IMR-90 (cell line): ENCODE measurements at regions of chr1 and their contacts with region 1.

Region 1: GRCh38 chr1:16078925-16079656 is 5.6 kb upstream of the FAM131C start:
- DNase-seq: peak; percentile 60
- ATAC-seq: peak; percentile 80
- H3K4me3 ChIP-seq: no peak overlapping the region
- H3K27ac ChIP-seq: no peak overlapping the region
- H3K4me1 ChIP-seq: peaks cover 15% of the 10 kb centered on the region
- H3K27me3 ChIP-seq: no peaks in the 10 kb centered on the region
- CTCF ChIP-seq: peak; percentile 89
- POLR2A ChIP-seq: peak; percentile 50; the same call in 1 of the 2 replicates
- RAD21 ChIP-seq: peak; percentile 96

Region 2: DNA sequence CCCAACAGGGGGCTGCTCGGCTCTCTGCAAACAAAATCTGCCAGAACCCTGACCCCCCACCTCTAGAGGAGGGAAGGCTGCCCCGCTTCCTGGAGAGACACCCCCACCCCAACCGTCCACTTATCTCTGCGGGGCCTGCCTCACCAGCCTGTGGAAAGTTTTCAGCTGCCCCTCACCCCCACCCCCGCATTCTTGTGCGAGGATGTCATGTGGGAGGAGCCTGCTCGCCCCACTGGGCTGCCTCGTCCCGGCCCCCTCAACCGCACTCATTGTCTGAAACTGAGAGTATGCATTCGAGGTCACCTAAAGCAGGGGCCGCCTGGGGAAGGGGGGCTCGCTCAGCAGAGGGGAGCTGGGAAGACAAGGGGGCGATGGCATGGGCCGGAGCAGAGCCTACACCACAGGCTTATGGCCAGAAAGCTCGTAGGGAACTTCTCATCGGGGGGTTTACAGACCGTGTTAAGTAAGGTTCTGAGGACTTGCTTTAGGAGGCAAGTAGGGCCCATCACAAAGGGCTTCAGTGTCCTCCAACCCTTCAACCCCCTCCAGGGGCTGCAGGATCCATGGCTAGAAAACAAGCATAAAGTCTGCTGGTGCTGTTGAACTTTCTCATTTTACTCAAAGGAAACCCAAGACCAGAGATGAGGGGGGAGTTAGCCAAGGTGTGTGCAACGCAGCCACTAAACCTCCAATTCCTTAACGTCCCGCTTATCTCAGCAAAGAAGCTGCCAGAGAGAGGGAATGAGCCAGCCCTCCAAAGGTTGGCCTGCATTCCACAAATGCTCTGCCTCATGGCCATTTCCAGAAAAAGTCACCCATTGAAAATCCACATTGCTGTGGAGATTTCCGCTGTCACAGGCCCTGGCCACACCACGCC is 67.4 kb after region 1 on chr1:
- CTCF ChIA-PET with region 1: interaction called, 5 read pairs
- POLR2A ChIA-PET with region 1: no interaction called
- dilution Hi-C with region 1: no loop called
- in situ Hi-C with region 1: no loop called
- intact Hi-C with region 1: loop called (anchors 2 kb)
- DNase-seq: peak; percentile 92
- ATAC-seq: peak; percentile 67
- H3K4me3 ChIP-seq: peak overlapping the region; percentile 13; the same call in 1 of the 2 replicates
- H3K27ac ChIP-seq: peak overlapping the region; percentile 99
- H3K4me1 ChIP-seq: peaks cover 51% of the 10 kb centered on the region
- H3K27me3 ChIP-seq: no peaks in the 10 kb centered on the region
- CTCF ChIP-seq: no peak
- POLR2A ChIP-seq: no peak; the same call in 1 of the 2 replicates
- RAD21 ChIP-seq: no peak

Region 3: DNA sequence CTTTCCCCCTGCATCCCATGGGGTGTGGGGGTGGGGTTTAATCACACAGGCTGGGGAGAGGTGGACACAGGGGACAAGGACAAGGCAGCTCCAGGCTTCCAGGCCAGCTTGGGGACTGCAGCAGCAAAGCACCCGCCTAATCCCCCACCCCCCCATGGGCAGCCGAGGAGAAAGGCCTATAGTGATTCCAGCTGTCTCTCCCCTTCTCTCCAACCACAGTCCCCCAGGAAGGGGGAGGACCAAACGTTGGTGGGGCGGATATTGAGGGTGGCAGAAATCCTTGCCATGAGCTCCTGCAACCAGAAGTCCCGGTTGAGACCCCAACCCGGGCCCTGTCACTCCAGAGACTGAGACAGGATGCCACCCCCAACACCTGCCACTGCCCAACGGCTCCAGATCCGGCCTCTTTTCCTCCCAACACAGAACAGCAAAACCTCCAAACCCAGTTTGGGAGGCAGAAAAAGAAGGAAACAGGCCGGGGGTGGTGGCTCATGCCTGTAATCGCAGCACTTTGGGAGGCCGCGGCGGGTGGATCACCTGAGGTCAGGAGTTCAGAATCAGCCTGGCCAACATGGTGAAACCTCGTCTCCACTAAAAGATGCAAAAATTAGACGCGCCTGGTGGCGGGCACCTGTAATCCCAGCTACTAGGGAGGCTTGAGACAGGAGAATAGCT is 75.0 kb after region 1 on chr1:
- CTCF ChIA-PET with region 1: interaction called, 8 read pairs
- POLR2A ChIA-PET with region 1: interaction called, 3 read pairs
- dilution Hi-C with region 1: no loop called
- in situ Hi-C with region 1: no loop called
- intact Hi-C with region 1: loop called (anchors 1 kb)
- DNase-seq: no peak
- ATAC-seq: no peak
- H3K4me3 ChIP-seq: peak overlapping the region; percentile 83
- H3K27ac ChIP-seq: peak overlapping the region; percentile 96
- H3K4me1 ChIP-seq: peaks cover 40% of the 10 kb centered on the region
- H3K27me3 ChIP-seq: no peaks in the 10 kb centered on the region
- CTCF ChIP-seq: no peak
- POLR2A ChIP-seq: no peak
- RAD21 ChIP-seq: no peak

Region 4: DNA sequence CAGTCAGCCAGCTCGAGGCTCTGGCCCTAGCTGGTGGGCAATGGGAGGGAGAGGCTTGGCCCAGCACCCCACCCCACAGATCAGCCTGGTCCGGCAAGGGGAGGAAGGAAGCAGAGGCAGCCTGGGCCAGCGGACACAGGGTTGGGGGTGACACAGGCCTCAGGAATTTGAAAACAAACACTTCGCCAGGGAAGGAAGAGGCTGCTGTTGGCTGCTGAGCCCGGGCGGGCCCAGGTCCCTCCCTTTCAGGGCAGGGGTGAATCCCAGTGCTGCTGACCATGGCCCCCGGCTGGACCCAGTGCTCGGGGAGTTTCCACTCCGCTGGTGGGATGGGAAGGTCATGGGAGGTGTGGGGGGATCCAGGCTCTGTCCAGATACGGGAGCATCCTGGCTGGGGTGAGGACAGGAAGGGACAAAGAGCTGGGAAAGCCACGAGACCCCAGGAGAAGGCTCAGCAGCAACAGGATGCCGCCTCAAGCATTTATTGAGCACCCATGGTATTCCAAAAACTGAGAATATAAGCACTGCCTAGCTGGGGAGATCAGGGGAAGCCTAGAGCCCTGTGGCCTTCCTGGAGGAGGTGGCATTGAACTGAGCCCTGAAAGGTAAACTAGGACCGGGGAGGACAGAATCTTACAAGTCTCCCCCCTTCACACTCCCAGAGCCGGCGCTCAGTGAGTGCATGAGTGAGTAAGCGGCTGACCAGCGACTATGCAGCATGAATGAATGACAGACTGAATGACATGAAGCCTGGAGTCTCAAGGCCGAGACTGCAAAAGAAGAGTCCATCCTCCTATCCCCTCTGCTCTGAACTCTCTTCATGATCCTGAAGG is 103.0 kb after region 1 on chr1:
- CTCF ChIA-PET with region 1: interaction called, 15 read pairs
- POLR2A ChIA-PET with region 1: interaction called, 6 read pairs
- dilution Hi-C with region 1: no loop called
- in situ Hi-C with region 1: loop called (anchors 5 kb)
- intact Hi-C with region 1: loop called (anchors 1 kb)
- DNase-seq: peak; percentile 89
- ATAC-seq: peak; percentile 97
- H3K4me3 ChIP-seq: no peak overlapping the region
- H3K27ac ChIP-seq: peak overlapping the region; percentile 99
- H3K4me1 ChIP-seq: peaks cover 22% of the 10 kb centered on the region
- H3K27me3 ChIP-seq: no peaks in the 10 kb centered on the region
- CTCF ChIP-seq: no peak
- POLR2A ChIP-seq: no peak
- RAD21 ChIP-seq: 0 out of 2 replicates have a peak, but pooled peaks have one; percentile 12

Region 5: GRCh38 chr1:16187748-16188401 is 108.8 kb after region 1 on chr1:
- CTCF ChIA-PET with region 1: interaction called, 15 read pairs
- POLR2A ChIA-PET with region 1: no interaction called
- dilution Hi-C with region 1: no loop called
- in situ Hi-C with region 1: loop called (anchors 5 kb)
- intact Hi-C with region 1: loop called (anchors 1 kb)
- DNase-seq: peak; percentile 89
- ATAC-seq: peak; percentile 97
- H3K4me3 ChIP-seq: no peak overlapping the region
- H3K27ac ChIP-seq: no peak overlapping the region
- H3K4me1 ChIP-seq: peaks cover 4% of the 10 kb centered on the region
- H3K27me3 ChIP-seq: no peaks in the 10 kb centered on the region
- CTCF ChIP-seq: peak; percentile 99
- POLR2A ChIP-seq: peak; percentile 66
- RAD21 ChIP-seq: peak; percentile 100

Region 6: GRCh38 chr1:16243936-16244649 is 165.0 kb after region 1 on chr1:
- CTCF ChIA-PET with region 1: interaction called, 3 read pairs
- POLR2A ChIA-PET with region 1: no interaction called
- dilution Hi-C with region 1: no loop called
- in situ Hi-C with region 1: loop called (anchors 5 kb)
- intact Hi-C with region 1: loop called (anchors 1 kb)
- DNase-seq: peak; percentile 81
- ATAC-seq: peak; percentile 93
- H3K4me3 ChIP-seq: no peak overlapping the region
- H3K27ac ChIP-seq: no peak overlapping the region
- H3K4me1 ChIP-seq: peaks cover 10% of the 10 kb centered on the region
- H3K27me3 ChIP-seq: no peaks in the 10 kb centered on the region
- CTCF ChIP-seq: peak; percentile 89
- POLR2A ChIP-seq: peak; percentile 31; the same call in 1 of the 2 replicates
- RAD21 ChIP-seq: peak; percentile 90

Region 7: DNA sequence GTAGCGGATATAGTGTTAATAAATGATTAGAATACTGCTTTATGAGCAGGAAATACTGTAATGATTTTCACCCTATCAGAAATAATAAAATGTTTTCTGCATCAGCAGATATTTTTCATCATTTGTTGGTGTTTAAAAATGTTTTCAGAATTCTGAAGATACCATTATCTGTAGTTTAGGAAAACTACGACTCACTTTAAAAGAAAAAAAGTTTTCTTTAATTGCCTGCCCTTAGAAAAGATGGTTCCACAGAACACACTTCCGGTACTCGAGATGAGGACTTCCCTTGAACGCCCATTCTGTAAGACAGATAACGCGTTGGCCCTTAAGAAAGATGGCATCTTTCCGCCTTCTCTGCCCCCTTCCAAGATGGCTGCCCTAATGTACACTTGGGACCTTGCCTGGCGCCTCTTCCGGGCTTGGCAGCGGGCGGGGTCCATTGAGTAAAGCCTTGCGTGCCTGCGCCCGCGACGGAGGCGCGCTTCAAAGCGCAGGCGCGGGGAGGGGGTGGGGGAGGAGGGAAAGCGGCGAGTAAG is 287.7 kb after region 1 on chr1 and contains the start of gene SZRD1:
- CTCF ChIA-PET with region 1: interaction called, 7 read pairs
- POLR2A ChIA-PET with region 1: no interaction called
- dilution Hi-C with region 1: no loop called
- in situ Hi-C with region 1: loop called (anchors 5 kb)
- intact Hi-C with region 1: loop called (anchors 1 kb)
- DNase-seq: peak; percentile 99
- ATAC-seq: peak; percentile 82
- H3K4me3 ChIP-seq: peak within 1 kb of the TSS; percentile 88
- H3K27ac ChIP-seq: peak within 1 kb of the TSS; percentile 96
- H3K4me1 ChIP-seq: no peaks in the 10 kb centered on the region; the same call in none of the 2 replicates
- H3K27me3 ChIP-seq: no peaks in the 10 kb centered on the region
- CTCF ChIP-seq: no peak
- POLR2A ChIP-seq: no peak
- RAD21 ChIP-seq: no peak
- total RNA-seq, gene SZRD1: 104 and 119 TPM in 2 replicates